ENCODE measurements at regions of chr2 and their contacts with region 1.

Region 1: GRCh38 chr2:190511104-190511503 is 23.4 kb downstream of the NEMP2 start:
- DNase-seq: no peak
- ATAC-seq: peak in 2 of 8 donors; percentile 55 to 70
- H3K4me3 ChIP-seq: no peak overlapping the region
- H3K27ac ChIP-seq: no peak overlapping the region
- H3K4me1 ChIP-seq: peaks cover 0 to 23% (median 0%) of the 10 kb centered on the region in 9 donors
- H3K27me3 ChIP-seq: no peaks in the 10 kb centered on the region
- CTCF ChIP-seq: peak in 8 of 9 donors; percentile 38 to 74 (median 62)

Region 2: DNA sequence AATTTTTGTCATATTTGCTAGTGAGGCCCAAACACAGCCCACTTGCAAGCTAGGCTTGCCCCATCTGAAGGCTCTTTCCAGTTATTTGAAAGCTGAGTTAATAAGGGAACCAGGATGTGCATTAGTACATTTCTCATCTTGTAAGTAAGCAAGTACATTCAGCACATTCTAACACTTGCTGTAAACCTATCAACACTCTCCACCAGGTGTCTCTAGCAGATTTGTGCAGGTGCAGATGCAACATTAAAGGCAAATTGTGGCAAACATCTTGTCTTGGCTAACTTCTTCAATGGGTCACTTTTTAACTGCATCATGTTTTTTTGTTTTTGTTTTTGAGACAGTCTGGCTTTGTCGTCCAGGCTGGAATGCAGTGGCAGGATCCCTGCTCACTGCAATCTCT is 128.3 kb before region 1 on chr2:
- intact Hi-C with region 1: loop called (anchors 2 to 10 kb)
- DNase-seq: peak in 1 of 2 donors; percentile 26
- ATAC-seq: peak in 5 of 8 donors; percentile 50 to 76 (median 67)
- H3K4me3 ChIP-seq: no peak overlapping the region
- H3K27ac ChIP-seq: no peak overlapping the region
- H3K4me1 ChIP-seq: peaks cover 0 to 11% (median 0%) of the 10 kb centered on the region in 9 donors
- H3K27me3 ChIP-seq: no peaks in the 10 kb centered on the region
- CTCF ChIP-seq: peak; percentile 34 to 73 (median 58)

Region 3: GRCh38 chr2:190396271-190396670 is 114.8 kb before region 1 on chr2:
- intact Hi-C with region 1: loop called in 1 of 10 experiments (anchors 5 kb)
- DNase-seq: no peak
- ATAC-seq: no peak
- H3K4me3 ChIP-seq: no peak overlapping the region
- H3K27ac ChIP-seq: no peak overlapping the region
- H3K4me1 ChIP-seq: no peaks in the 10 kb centered on the region
- H3K27me3 ChIP-seq: peaks cover 0 to 5% (median 0%) of the 10 kb centered on the region in 7 donors
- CTCF ChIP-seq: no peak

Measured in heart right ventricle (tissue), 16 donors.